ENCODE measurements at regions of chr17 and their contacts with region 1.

Region 1: DNA sequence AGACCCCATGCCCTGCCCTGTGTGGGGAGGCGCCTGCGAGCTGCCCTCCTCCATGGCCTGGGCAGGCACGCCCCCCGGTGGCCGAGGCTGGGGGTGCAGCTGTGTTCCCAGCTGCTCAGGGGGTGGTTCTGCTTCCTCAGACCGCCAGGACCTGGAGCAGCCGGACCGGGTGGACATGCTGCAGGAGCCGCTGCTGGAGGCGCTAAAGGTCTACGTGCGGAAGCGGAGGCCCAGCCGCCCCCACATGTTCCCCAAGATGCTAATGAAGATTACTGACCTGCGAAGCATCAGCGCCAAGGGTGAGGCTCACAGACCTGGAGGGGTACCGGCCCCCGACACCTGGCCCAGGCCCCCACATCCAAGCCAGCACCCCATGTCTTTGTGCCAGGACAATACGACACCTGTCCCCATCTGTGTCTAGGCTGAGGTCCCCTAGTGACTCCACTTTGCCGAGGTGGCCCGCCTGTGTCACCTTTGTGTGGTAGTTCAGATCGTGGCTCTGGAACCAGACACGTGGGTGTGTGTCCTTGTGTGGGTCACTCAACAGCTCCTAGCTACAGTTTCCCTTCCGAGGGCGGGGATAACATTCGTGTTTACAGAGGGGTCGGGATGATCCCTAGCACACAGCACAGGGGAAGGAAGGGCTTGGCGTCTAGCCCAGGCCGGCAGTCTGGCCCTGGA is 9.3 kb downstream of the GJD3 start:
- DNase-seq: peak; percentile 70 to 81 (median 71)
- H3K4me3 ChIP-seq: no peak overlapping the region
- H3K4me3 Mint-ChIP-seq: no peak overlapping the region
- H3K27ac ChIP-seq: no peak overlapping the region
- H3K27ac Mint-ChIP-seq: peak overlapping the region in 6 of 7 donors; percentile 29 to 86 (median 46)
- H3K4me1 ChIP-seq: peaks cover 9% of the 10 kb centered on the region
- H3K4me1 Mint-ChIP-seq: peaks cover 11 to 25% (median 12%) of the 10 kb centered on the region in 4 donors
- H3K27me3 ChIP-seq: no peaks in the 10 kb centered on the region
- H3K27me3 Mint-ChIP-seq: no peaks in the 10 kb centered on the region

Region 2: GRCh38 chr17:40287494-40288369 is 67.5 kb before region 1 on chr17 and contains the start of gene CDC6:
- CTCF ChIA-PET with region 1: interaction called, 15 read pairs
- POLR2A ChIA-PET with region 1: no interaction called
- intact Hi-C with region 1: no loop called
- DNase-seq: peak; percentile 97 to 100 (median 98)
- H3K4me3 ChIP-seq: peak within 1 kb of the TSS; percentile 80 to 89
- H3K4me3 Mint-ChIP-seq: peak within 1 kb of the TSS; percentile 97 to 100 (median 99)
- H3K27ac ChIP-seq: peak within 1 kb of the TSS; percentile 42
- H3K27ac Mint-ChIP-seq: peak within 1 kb of the TSS; percentile 82 to 98 (median 94)
- H3K4me1 ChIP-seq: peaks cover 26% of the 10 kb centered on the region
- H3K4me1 Mint-ChIP-seq: peaks cover 17 to 40% (median 27%) of the 10 kb centered on the region in 4 donors
- H3K27me3 ChIP-seq: no peaks in the 10 kb centered on the region
- H3K27me3 Mint-ChIP-seq: no peaks in the 10 kb centered on the region
- total RNA-seq, gene CDC6: 0.72 to 2.1 TPM

Region 3: GRCh38 chr17:40293363-40293762 is 61.9 kb before region 1 on chr17:
- CTCF ChIA-PET with region 1: interaction called, 573 read pairs
- POLR2A ChIA-PET with region 1: interaction called, 1,054 read pairs
- intact Hi-C with region 1: no loop called
- DNase-seq: no peak
- H3K4me3 ChIP-seq: no peak overlapping the region
- H3K4me3 Mint-ChIP-seq: no peak overlapping the region
- H3K27ac ChIP-seq: no peak overlapping the region
- H3K27ac Mint-ChIP-seq: peak overlapping the region in 2 of 7 donors; percentile 25 to 47
- H3K4me1 ChIP-seq: peaks cover 8% of the 10 kb centered on the region
- H3K4me1 Mint-ChIP-seq: peaks cover 3 to 12% (median 6%) of the 10 kb centered on the region in 4 donors
- H3K27me3 ChIP-seq: no peaks in the 10 kb centered on the region
- H3K27me3 Mint-ChIP-seq: no peaks in the 10 kb centered on the region

Region 4: DNA sequence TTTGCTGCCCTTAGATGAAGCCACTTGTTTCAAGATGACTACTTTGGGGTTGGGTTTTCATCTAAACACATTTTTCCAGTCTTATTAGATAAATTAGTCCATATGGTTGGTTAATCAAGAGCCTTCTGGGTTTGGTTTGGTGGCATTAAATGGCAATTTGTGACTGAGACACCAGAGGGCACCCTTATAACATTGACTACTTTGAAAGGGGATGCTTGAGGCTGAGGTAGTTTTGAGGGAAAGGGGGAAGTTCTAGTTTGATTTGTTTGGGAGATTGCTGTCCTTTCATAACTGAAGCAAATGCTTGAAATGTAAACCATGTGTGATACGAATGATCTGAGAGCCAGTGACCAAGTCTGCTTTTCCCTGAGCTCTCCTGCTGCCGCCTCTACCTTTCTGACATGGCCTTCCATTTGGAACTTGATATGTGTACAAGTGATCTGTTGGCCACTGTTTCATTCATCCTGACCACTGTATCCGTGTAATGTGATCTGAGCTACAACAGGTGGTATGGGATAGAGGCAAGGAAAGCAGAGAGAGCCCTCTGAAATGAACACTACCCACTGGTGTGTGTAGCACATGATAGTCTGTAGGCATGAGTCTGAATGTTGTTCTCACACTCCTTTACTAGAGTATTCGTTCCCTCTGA is 52.1 kb before region 1 on chr17:
- CTCF ChIA-PET with region 1: interaction called, 573 read pairs
- POLR2A ChIA-PET with region 1: interaction called, 1,054 read pairs
- intact Hi-C with region 1: loop called (anchors 1 kb)
- DNase-seq: peak; percentile 62 to 70 (median 66)
- H3K4me3 ChIP-seq: no peak overlapping the region
- H3K4me3 Mint-ChIP-seq: no peak overlapping the region
- H3K27ac ChIP-seq: no peak overlapping the region
- H3K27ac Mint-ChIP-seq: peak overlapping the region in 5 of 7 donors; percentile 2 to 53 (median 13)
- H3K4me1 ChIP-seq: peaks cover 37% of the 10 kb centered on the region
- H3K4me1 Mint-ChIP-seq: peaks cover 14 to 17% (median 15%) of the 10 kb centered on the region in 4 donors
- H3K27me3 ChIP-seq: no peaks in the 10 kb centered on the region
- H3K27me3 Mint-ChIP-seq: no peaks in the 10 kb centered on the region

Region 5: GRCh38 chr17:40323391-40324381 is 31.6 kb before region 1 on chr17:
- CTCF ChIA-PET with region 1: interaction called, 29 read pairs
- POLR2A ChIA-PET with region 1: interaction called, 1,054 read pairs
- intact Hi-C with region 1: no loop called
- DNase-seq: peak; percentile 73 to 97 (median 81)
- H3K4me3 ChIP-seq: peak overlapping the region; percentile 80 to 95
- H3K4me3 Mint-ChIP-seq: peak overlapping the region; percentile 91 to 98 (median 96)
- H3K27ac ChIP-seq: peak overlapping the region; percentile 99
- H3K27ac Mint-ChIP-seq: peak overlapping the region; percentile 96 to 100 (median 99)
- H3K4me1 ChIP-seq: peaks cover 91% of the 10 kb centered on the region
- H3K4me1 Mint-ChIP-seq: peaks cover 65 to 97% (median 77%) of the 10 kb centered on the region in 4 donors
- H3K27me3 ChIP-seq: no peaks in the 10 kb centered on the region
- H3K27me3 Mint-ChIP-seq: peaks cover 1 to 3% of the 10 kb centered on the region in 2 donors

Region 6: GRCh38 chr17:40340880-40341807 is 14.1 kb before region 1 on chr17:
- CTCF ChIA-PET with region 1: interaction called, 21 read pairs
- POLR2A ChIA-PET with region 1: interaction called, 12 read pairs
- intact Hi-C with region 1: loop called (anchors 2 kb)
- DNase-seq: peak; percentile 84 to 95 (median 87)
- H3K4me3 ChIP-seq: peak overlapping the region; percentile 51 to 69
- H3K4me3 Mint-ChIP-seq: peak overlapping the region; percentile 84 to 88 (median 86)
- H3K27ac ChIP-seq: peak overlapping the region; percentile 90
- H3K27ac Mint-ChIP-seq: peak overlapping the region; percentile 90 to 99 (median 98)
- H3K4me1 ChIP-seq: peaks cover 85% of the 10 kb centered on the region
- H3K4me1 Mint-ChIP-seq: peaks cover 40 to 81% (median 69%) of the 10 kb centered on the region in 4 donors
- H3K27me3 ChIP-seq: no peaks in the 10 kb centered on the region
- H3K27me3 Mint-ChIP-seq: no peaks in the 10 kb centered on the region

Measured in CD4-positive, alpha-beta memory T cell (primary cell).